ENCODE measurements at regions of chr12 and their contacts with region 1.

Region 1: DNA sequence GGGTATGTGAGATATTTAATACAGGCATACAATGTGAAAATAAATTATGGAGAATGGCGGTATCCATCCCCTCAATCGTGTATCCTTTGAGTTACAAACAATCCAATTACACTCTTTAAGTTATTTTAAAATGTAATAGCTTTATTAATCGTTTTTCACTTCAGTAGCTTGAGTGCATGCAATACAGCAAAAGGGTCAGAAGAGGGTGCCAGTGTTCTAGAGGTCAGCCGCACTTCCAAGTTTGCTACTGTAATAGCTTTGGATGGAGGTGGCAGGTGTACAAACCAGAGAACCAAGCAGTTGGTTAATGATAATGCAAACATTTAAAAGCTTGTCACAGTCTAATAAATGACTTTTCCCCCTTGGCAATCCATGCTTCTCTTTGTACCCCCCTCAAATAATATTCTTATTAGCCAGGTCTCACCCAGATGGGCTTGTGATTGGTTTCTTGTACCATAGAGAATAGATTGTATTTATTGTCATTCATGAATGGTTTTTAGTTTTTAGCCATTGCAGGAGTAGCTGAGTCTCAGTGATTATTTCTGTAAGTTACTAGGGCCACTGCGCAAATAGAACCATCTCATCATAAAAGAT is 127.0 kb downstream of the ERC1 start:
- DNase-seq: peak; percentile 81
- H3K4me3 ChIP-seq: no peak overlapping the region
- H3K27ac ChIP-seq: no peak overlapping the region
- H3K4me1 ChIP-seq: peaks cover 13% of the 10 kb centered on the region
- H3K27me3 ChIP-seq: no peaks in the 10 kb centered on the region
- CTCF ChIP-seq: peak; percentile 66 to 79
- POLR2A ChIP-seq: no peak

Region 2: DNA sequence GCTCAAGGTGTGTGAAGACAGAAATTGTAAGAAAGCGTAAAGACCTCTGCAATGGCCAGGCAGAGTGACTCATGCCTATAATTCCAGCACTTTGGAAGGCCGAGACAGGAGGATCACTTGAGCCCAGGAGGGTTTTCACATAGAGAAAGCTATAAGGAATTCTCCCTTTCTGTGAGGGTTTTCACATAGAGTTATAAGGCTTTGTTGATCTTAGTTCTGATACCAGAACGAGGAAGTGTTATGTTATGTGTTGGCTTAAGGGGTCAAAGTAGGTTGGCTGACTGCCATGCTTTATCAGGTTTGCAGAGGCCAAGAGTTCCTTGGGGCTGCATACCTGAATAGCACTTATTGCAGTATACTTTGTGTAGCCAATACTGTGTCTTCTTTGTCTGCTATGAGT is 12.1 kb after region 1 on chr12:
- CTCF ChIA-PET with region 1: interaction called, 41 read pairs
- POLR2A ChIA-PET with region 1: no interaction called
- dilution Hi-C with region 1: no loop called
- intact Hi-C with region 1: no loop called
- DNase-seq: peak; percentile 72
- H3K4me3 ChIP-seq: no peak overlapping the region
- H3K27ac ChIP-seq: no peak overlapping the region
- H3K4me1 ChIP-seq: peaks cover 8% of the 10 kb centered on the region
- H3K27me3 ChIP-seq: no peaks in the 10 kb centered on the region
- CTCF ChIP-seq: no peak
- POLR2A ChIP-seq: no peak

Region 3: DNA sequence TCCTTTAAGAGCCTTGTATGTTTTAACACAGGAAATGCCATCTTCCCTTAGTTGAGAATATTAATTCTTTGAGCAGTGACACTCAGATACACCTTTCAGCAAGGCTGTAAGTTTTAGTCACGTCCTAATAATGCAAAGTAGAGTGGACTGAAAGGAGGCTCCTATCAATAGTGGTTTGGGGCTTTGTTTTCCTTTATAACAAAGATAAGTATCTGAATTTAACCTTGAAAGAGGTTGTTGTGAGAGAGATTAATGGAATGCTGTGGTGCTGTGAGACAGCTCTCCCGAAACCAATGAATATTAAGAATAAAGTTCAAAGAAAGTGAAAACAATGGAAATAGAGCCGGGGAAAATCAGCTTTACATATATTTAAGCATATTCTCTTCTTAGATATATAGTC is 132.6 kb after region 1 on chr12:
- CTCF ChIA-PET with region 1: interaction called, 11 read pairs
- POLR2A ChIA-PET with region 1: no interaction called
- dilution Hi-C with region 1: no loop called
- intact Hi-C with region 1: no loop called
- DNase-seq: no peak
- H3K4me3 ChIP-seq: no peak overlapping the region
- H3K27ac ChIP-seq: no peak overlapping the region
- H3K4me1 ChIP-seq: peaks cover 4% of the 10 kb centered on the region
- H3K27me3 ChIP-seq: no peaks in the 10 kb centered on the region
- CTCF ChIP-seq: no peak
- POLR2A ChIP-seq: no peak

Region 4: DNA sequence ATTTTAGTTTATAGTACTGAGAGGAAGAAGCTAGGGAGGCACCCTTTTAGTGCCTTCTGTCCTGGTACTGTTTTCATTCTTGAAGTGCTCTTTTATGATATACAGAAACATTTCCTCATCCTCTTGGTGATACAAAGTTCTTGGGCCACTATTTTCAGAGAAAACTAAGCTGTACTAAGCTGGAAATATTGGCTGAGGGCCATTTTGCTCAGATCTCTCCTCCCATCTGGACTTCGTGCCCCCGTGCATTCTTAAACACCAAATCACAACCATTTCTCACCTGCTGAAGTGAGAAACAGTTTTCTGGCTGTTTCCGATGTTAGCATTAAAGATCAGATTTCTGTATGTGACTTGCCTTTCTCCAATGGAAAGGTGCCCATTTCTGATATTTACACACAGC is 317.4 kb after region 1 on chr12:
- CTCF ChIA-PET with region 1: interaction called, 13 read pairs
- POLR2A ChIA-PET with region 1: no interaction called
- dilution Hi-C with region 1: no loop called
- intact Hi-C with region 1: no loop called
- DNase-seq: peak; percentile 40
- H3K4me3 ChIP-seq: no peak overlapping the region
- H3K27ac ChIP-seq: no peak overlapping the region
- H3K4me1 ChIP-seq: no peaks in the 10 kb centered on the region
- H3K27me3 ChIP-seq: no peaks in the 10 kb centered on the region
- CTCF ChIP-seq: no peak
- POLR2A ChIP-seq: no peak

Region 5: DNA sequence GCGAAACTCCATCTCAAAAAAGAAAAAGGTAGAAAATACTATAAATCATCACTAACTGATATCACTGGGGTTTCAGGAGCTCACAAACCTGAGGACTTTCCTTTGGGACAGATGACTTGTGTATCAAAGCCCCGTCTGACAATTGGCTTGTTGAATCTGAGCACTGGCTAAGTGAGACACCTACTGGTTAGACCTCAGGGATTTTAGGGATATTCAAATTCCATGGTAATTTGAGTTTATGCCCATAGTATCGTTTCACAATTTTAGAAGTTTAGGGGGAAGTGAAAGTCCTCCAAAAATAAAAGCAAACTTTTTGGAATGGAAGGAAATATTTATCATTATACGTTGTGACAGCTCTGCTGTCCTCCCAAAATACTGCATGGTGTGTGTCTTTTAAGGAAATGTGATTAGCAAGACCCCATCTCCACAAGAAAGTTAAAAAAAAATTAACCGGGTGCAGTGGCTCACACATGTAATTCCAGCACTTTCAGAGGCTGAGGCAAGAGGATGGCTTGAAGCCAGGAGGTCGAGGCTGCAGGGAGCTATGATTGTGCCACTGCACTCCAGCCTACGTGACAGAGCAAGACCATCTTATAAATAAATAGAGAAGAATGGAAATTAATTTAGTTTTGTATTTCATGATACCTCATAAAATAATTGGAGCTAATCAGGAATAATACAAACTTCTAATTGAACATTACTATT is 427.1 kb after region 1 on chr12:
- CTCF ChIA-PET with region 1: interaction called, 130 read pairs
- POLR2A ChIA-PET with region 1: no interaction called
- dilution Hi-C with region 1: loop called (anchors 25 kb)
- intact Hi-C with region 1: loop called (anchors 1 kb)
- DNase-seq: peak; percentile 32
- H3K4me3 ChIP-seq: no peak overlapping the region
- H3K27ac ChIP-seq: no peak overlapping the region
- H3K4me1 ChIP-seq: no peaks in the 10 kb centered on the region
- H3K27me3 ChIP-seq: peaks cover 5 to 10% of the 10 kb centered on the region in 2 experiments
- CTCF ChIP-seq: peak in 1 of 2 donors; percentile 26
- POLR2A ChIP-seq: no peak

Region 6: DNA sequence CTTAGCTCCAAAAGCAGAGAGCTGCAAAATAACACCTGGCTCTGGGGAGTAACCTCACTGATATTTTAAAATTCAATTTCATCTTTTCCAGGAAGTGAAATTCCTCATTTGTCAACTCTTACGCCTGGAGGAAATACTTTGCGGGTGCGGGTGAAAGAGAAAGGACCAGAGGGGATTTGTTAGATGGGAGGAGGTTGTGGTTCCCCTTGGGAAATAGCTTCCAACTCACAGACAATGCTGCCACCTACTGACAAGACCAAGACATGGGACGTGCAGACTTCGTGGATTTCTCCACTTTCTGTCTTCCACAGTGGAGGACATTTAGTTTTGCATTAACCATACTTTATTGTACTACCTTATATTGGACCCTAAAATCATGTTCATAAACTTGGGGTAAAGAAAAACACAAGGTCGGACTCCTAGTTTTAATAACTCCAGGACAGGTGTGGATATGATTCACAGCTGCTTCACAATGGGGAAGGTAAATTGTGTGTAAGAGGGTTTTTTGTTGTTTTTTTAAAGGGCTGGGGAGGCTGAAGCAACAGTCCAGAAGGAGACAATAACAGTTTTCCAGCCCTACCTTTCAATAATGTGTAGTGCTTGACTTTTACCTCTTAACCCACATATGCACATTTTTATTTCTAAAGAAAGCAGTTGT is 465.5 kb after region 1 on chr12:
- CTCF ChIA-PET with region 1: interaction called, 469 read pairs
- POLR2A ChIA-PET with region 1: interaction called, 8 read pairs
- dilution Hi-C with region 1: no loop called
- intact Hi-C with region 1: loop called (anchors 1 kb)
- DNase-seq: peak; percentile 80
- H3K4me3 ChIP-seq: no peak overlapping the region
- H3K27ac ChIP-seq: no peak overlapping the region
- H3K4me1 ChIP-seq: peaks cover 6% of the 10 kb centered on the region
- H3K27me3 ChIP-seq: no peaks in the 10 kb centered on the region
- CTCF ChIP-seq: peak; percentile 74 to 79
- POLR2A ChIP-seq: no peak

Measured in endothelial cell of umbilical vein (primary cell).